GM12878 (cell line): ENCODE measurements at regions of chr11 and their contacts with region 1.

Region 1: DNA sequence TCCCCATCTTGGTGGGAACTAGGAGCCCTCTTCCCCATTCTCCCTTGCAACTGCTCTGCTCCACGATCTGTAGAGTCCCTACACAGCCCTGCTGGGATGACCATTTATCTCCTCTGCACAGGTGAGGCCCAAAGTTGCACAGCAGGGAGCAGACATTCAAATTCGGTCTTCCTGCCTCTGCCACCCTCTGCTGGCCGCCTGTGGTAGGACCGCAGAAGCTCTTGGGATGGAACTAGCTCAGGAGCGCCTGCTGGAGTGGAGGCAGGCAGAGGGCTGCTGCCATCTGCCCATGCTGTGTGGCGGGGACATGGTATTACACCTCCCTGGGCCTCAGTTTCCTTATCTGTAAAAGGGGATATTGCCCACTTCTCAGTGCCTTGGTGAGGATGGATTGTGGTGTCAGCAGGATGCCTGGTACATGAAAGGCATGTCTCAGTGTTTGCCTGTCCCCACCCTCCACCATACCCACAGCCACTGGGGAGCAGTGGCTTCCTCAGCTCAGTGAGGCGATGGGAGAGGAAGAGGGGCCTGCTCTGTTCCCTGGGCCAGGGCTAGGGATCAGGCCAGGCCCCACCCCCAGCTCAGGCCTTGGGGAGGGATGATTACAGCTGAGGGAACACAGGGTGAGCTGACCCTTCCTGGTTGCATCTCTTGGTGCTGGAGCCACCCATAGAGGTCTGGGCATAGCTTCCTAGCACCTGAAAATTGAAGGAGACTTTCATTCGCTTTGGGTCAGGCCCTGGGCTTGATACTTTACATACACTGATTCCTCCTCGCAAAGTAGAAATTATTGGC is 11.3 kb upstream of the OMP start:
- DNase-seq: no peak
- ATAC-seq: peak; percentile 97
- H3K4me3 ChIP-seq: no peak overlapping the region
- H3K27ac ChIP-seq: no peak overlapping the region
- H3K4me1 ChIP-seq: no peaks in the 10 kb centered on the region
- H3K27me3 ChIP-seq: no peaks in the 10 kb centered on the region
- CTCF ChIP-seq: peak; percentile 96 to 98 (median 97)
- EP300 ChIP-seq: no peak
- POLR2A ChIP-seq: no peak
- RAD21 ChIP-seq: peak; percentile 95

Region 2: GRCh38 chr11:76807206-76807875 is 284.0 kb before region 1 on chr11:
- CTCF ChIA-PET with region 1: interaction called, 8 read pairs
- POLR2A ChIA-PET with region 1: no interaction called
- RAD21 ChIA-PET with region 1: interaction called, 4 read pairs
- SMC1A ChIA-PET with region 1: no interaction called
- in situ Hi-C with region 1: no loop called
- intact Hi-C with region 1: loop called (anchors 1 kb)
- DNase-seq: no peak
- ATAC-seq: peak; percentile 91
- H3K4me3 ChIP-seq: no peak overlapping the region
- H3K27ac ChIP-seq: no peak overlapping the region
- H3K4me1 ChIP-seq: no peaks in the 10 kb centered on the region; the same call in 1 of the 2 replicates
- H3K27me3 ChIP-seq: peaks cover 0 to 2% of the 10 kb centered on the region in 2 experiments; a peak in 1 of 4 replicates
- CTCF ChIP-seq: peak; percentile 72 to 76 (median 72)
- EP300 ChIP-seq: no peak
- POLR2A ChIP-seq: no peak
- RAD21 ChIP-seq: peak; percentile 50; the same call in 1 of the 2 replicates

Region 3: GRCh38 chr11:77026221-77026620 is 65.1 kb before region 1 on chr11:
- CTCF ChIA-PET with region 1: interaction called, 19 read pairs
- POLR2A ChIA-PET with region 1: no interaction called
- RAD21 ChIA-PET with region 1: interaction called, 3 read pairs
- SMC1A ChIA-PET with region 1: interaction called, 3 read pairs
- in situ Hi-C with region 1: no loop called
- intact Hi-C with region 1: no loop called
- DNase-seq: no peak
- ATAC-seq: no peak
- H3K4me3 ChIP-seq: no peak overlapping the region
- H3K27ac ChIP-seq: no peak overlapping the region
- H3K4me1 ChIP-seq: no peaks in the 10 kb centered on the region
- H3K27me3 ChIP-seq: no peaks in the 10 kb centered on the region; a peak in 1 of 4 replicates
- CTCF ChIP-seq: no peak
- EP300 ChIP-seq: no peak
- POLR2A ChIP-seq: no peak
- RAD21 ChIP-seq: no peak

Region 4: GRCh38 chr11:77047007-77047927 is 44.1 kb before region 1 on chr11:
- CTCF ChIA-PET with region 1: interaction called, 105 read pairs
- POLR2A ChIA-PET with region 1: interaction called, 4 read pairs
- RAD21 ChIA-PET with region 1: interaction called, 51 read pairs
- SMC1A ChIA-PET with region 1: interaction called, 41 read pairs
- in situ Hi-C with region 1: loop called (anchors 5 kb)
- intact Hi-C with region 1: loop called (anchors 1 kb)
- DNase-seq: peak; percentile 92
- ATAC-seq: peak; percentile 97
- H3K4me3 ChIP-seq: peak overlapping the region; percentile 15; the same call in 1 of the 2 replicates
- H3K27ac ChIP-seq: no peak overlapping the region
- H3K4me1 ChIP-seq: no peaks in the 10 kb centered on the region; the same call in 1 of the 2 replicates
- H3K27me3 ChIP-seq: no peaks in the 10 kb centered on the region; a peak in 1 of 4 replicates
- CTCF ChIP-seq: peak; percentile 45 to 70 (median 59); a peak in 5 of 6 replicates
- EP300 ChIP-seq: no peak; a peak in 1 of 4 replicates
- POLR2A ChIP-seq: no peak
- RAD21 ChIP-seq: peak; percentile 58

Region 5: GRCh38 chr11:77052518-77052917 is 38.8 kb before region 1 on chr11:
- CTCF ChIA-PET with region 1: interaction called, 105 read pairs
- POLR2A ChIA-PET with region 1: no interaction called
- RAD21 ChIA-PET with region 1: interaction called, 51 read pairs
- SMC1A ChIA-PET with region 1: interaction called, 41 read pairs
- in situ Hi-C with region 1: loop called (anchors 5 kb)
- intact Hi-C with region 1: loop called (anchors 1 kb)
- DNase-seq: no peak
- ATAC-seq: no peak
- H3K4me3 ChIP-seq: no peak overlapping the region
- H3K27ac ChIP-seq: no peak overlapping the region
- H3K4me1 ChIP-seq: no peaks in the 10 kb centered on the region
- H3K27me3 ChIP-seq: no peaks in the 10 kb centered on the region
- CTCF ChIP-seq: no peak
- EP300 ChIP-seq: no peak
- POLR2A ChIP-seq: no peak
- RAD21 ChIP-seq: no peak

Region 6: DNA sequence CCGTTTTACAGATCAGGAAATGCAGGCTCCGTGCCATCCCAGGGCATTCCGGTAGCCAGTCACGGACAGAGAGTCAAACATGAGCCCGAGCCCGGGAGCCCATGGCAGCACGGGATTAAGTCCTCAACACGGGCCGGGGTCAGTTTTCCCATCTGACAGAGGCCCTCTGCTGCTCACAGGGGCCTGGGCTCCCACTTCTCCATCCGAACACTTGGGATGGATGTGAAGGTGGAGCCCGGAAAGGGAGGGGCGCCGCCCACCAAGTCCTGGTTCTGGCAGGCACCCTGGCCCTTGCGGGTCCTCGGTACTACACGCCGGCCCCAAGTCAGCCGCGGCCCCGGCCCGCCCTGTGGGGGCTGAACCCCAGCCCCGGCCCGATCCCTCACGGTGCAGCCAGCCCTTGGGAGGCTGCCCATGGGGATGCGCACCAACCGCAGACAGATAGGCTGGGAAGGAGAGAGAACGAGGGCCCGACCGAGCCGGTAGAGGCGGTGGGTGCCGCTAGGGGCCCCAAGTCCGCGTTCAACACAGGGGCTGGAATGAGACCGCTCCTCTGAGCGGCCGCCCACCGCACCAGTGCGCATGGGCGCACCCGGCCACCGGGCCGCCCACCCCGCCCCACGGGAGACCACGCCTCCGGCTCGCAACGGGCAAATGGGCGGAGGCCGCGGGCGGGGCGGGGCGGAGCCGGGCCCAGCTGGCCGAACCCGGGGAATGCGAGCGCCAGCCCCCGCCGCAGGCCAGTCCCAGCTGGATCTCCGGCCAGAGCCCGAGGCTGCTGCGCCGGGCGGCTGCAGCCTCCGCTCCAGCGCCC is 24.9 kb before region 1 on chr11 and contains the start of gene CAPN5:
- CTCF ChIA-PET with region 1: interaction called, 38 read pairs
- POLR2A ChIA-PET with region 1: no interaction called
- RAD21 ChIA-PET with region 1: interaction called, 3 read pairs
- SMC1A ChIA-PET with region 1: interaction called, 8 read pairs
- in situ Hi-C with region 1: no loop called
- intact Hi-C with region 1: no loop called
- DNase-seq: no peak
- ATAC-seq: peak; percentile 98
- H3K4me3 ChIP-seq: peak within 1 kb of the TSS; percentile 64
- H3K27ac ChIP-seq: no peak within 1 kb of the TSS
- H3K4me1 ChIP-seq: peaks cover 6% of the 10 kb centered on the region
- H3K27me3 ChIP-seq: peaks cover 0 to 1% of the 10 kb centered on the region in 2 experiments; a peak in 2 of 4 replicates
- CTCF ChIP-seq: peak; percentile 15 to 31 (median 25); a peak in 3 of 6 replicates
- EP300 ChIP-seq: no peak
- POLR2A ChIP-seq: peak; percentile 59
- RAD21 ChIP-seq: no peak
- polyA plus RNA-seq, gene CAPN5: 0.02 TPM in 1 of 2 experiments, not detected in the other

Region 7: DNA sequence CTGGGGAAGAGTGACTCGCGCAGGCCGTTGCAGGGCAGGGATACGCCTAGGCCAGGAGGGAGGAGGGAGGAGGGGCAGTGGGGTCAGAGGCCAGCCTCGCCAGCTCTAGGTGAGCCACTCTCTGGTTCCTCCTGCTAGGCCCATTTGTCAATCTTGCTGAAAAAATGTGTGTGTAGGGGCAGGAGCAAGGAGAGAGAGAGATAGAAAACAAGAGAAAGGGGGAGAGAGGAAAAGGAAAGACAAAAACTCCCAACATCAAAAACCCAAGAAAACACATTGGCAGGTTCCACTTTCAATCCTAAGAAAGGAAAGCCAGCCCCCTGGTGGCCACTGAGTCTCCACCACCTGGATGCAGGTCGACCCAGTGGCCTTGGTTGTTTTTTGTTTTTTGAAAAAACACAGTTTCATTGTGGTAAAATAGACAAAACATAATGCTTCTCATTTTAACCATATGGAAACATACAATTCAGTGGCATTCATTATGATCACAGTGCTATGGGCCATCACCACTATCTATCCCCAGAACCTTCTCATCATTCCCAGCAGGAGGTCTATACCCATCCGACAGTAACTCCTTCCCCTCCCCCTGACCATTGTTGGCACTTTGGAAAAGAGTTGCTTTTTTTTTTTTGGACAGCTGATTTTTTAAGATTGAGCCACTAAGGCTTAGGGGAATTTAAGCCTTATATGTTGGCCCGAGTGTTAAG is 22.2 kb after region 1 on chr11:
- CTCF ChIA-PET with region 1: interaction called, 12 read pairs
- POLR2A ChIA-PET with region 1: no interaction called
- RAD21 ChIA-PET with region 1: interaction called, 3 read pairs
- SMC1A ChIA-PET with region 1: interaction called, 4 read pairs
- in situ Hi-C with region 1: no loop called
- intact Hi-C with region 1: no loop called
- DNase-seq: no peak
- ATAC-seq: peak; percentile 67
- H3K4me3 ChIP-seq: no peak overlapping the region
- H3K27ac ChIP-seq: no peak overlapping the region
- H3K4me1 ChIP-seq: no peaks in the 10 kb centered on the region
- H3K27me3 ChIP-seq: no peaks in the 10 kb centered on the region; a peak in 1 of 4 replicates
- CTCF ChIP-seq: peak; percentile 40 to 55 (median 48)
- EP300 ChIP-seq: no peak
- POLR2A ChIP-seq: no peak
- RAD21 ChIP-seq: 0 out of 2 replicates have a peak, but pooled peaks have one; percentile 18

Region 8: GRCh38 chr11:77217156-77217555 is 125.8 kb after region 1 on chr11:
- CTCF ChIA-PET with region 1: no interaction called
- POLR2A ChIA-PET with region 1: no interaction called
- RAD21 ChIA-PET with region 1: no interaction called
- SMC1A ChIA-PET with region 1: no interaction called
- in situ Hi-C with region 1: no loop called
- intact Hi-C with region 1: no loop called
- DNase-seq: no peak
- ATAC-seq: no peak
- H3K4me3 ChIP-seq: no peak overlapping the region
- H3K27ac ChIP-seq: no peak overlapping the region
- H3K4me1 ChIP-seq: no peaks in the 10 kb centered on the region
- H3K27me3 ChIP-seq: no peaks in the 10 kb centered on the region
- CTCF ChIP-seq: no peak
- EP300 ChIP-seq: no peak
- POLR2A ChIP-seq: no peak
- RAD21 ChIP-seq: no peak

Region 9: DNA sequence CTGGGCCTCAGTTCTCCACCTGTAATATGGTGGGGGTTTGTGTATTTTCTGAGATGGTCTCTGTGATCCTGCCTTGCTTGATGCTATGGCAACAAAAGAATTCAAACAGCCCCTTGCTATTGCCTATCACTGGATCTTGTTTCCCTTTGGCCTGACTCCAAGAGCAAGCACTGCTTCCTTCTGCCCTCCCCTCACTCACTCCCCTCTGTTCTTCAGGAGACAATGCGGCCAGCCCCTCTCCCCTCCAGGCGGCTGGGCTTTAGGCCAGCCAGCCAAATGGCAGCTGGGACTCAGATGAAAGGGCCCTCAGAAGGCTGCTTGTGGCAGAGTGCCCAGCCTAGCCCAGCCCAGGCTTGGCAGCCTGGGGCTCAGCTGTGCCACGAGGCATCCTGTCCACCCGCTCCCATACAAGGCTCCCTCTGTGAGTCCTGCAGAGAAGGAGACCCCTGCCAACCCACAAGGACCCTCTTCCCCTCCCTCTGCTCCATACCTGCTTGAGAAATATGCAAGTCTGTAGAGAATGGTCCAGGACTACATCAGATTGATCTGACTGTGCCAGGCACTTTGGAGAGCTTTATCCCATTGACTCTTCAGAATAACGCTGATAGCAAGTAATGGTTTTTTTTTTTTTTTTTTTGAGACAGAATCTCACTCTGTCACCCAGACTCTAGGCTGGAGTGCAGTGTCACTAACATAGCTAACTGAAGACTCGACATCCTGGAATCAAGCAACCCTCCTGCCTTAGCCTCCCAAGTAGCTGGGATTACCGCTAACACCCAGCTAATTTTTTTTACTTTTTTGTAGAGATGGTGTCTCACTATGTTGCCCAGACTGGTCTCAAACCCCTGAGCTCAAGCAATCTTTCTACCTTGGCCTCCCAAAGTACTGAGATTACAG is 939.3 kb after region 1 on chr11:
- CTCF ChIA-PET with region 1: no interaction called
- POLR2A ChIA-PET with region 1: no interaction called
- RAD21 ChIA-PET with region 1: no interaction called
- SMC1A ChIA-PET with region 1: no interaction called
- in situ Hi-C with region 1: no loop called
- intact Hi-C with region 1: no loop called
- DNase-seq: no peak
- ATAC-seq: no peak
- H3K4me3 ChIP-seq: no peak overlapping the region
- H3K27ac ChIP-seq: no peak overlapping the region
- H3K4me1 ChIP-seq: peaks cover 6% of the 10 kb centered on the region
- H3K27me3 ChIP-seq: no peaks in the 10 kb centered on the region
- CTCF ChIP-seq: no peak
- EP300 ChIP-seq: no peak
- POLR2A ChIP-seq: no peak
- RAD21 ChIP-seq: no peak